Endothelial cell of umbilical vein (primary cell): ENCODE measurements at regions of chr20 and their contacts with region 1.

Region 1: DNA sequence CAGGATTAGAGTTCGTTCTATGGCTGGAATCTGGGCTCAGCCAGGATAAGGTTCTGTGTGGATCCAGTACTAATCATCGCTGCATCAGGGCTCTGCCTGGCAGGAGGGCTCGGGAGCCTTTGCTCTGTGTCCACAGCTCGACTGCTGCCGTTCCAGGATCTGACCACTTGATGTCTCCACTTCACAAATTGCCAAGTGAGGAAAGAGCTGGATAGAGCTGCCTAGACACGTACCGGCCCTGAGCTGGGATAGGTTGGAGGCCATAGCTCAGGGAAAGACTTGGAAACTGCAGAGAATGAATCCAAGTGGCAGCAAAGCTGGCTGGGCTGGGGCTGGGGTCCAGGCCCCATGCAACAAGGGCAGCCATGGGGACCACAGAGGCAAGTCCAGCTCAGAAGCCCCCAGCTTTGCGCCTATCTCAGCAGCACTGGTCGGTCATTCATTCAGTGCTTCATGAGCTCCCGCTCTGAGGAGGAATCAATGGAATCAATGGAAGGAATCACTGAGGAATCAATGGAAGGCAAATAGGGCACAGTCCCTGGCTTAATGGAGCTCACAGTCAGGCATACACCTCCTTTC is 38.0 kb upstream of the TOP1 start:
- DNase-seq: peak; percentile 89
- H3K4me3 ChIP-seq: no peak overlapping the region
- H3K27ac ChIP-seq: no peak overlapping the region
- H3K4me1 ChIP-seq: peaks cover 16% of the 10 kb centered on the region
- H3K27me3 ChIP-seq: no peaks in the 10 kb centered on the region
- CTCF ChIP-seq: peak; percentile 88 to 89
- POLR2A ChIP-seq: no peak

Region 2: GRCh38 chr20:40744072-40744817 is 246.4 kb before region 1 on chr20:
- CTCF ChIA-PET with region 1: no interaction called
- POLR2A ChIA-PET with region 1: no interaction called
- dilution Hi-C with region 1: no loop called
- intact Hi-C with region 1: no loop called
- DNase-seq: no peak
- H3K4me3 ChIP-seq: no peak overlapping the region
- H3K27ac ChIP-seq: no peak overlapping the region
- H3K4me1 ChIP-seq: no peaks in the 10 kb centered on the region
- H3K27me3 ChIP-seq: peaks cover 11 to 14% of the 10 kb centered on the region in 2 experiments
- CTCF ChIP-seq: no peak
- POLR2A ChIP-seq: no peak

Region 3: GRCh38 chr20:40913224-40914185 is 77.1 kb before region 1 on chr20:
- CTCF ChIA-PET with region 1: no interaction called
- POLR2A ChIA-PET with region 1: no interaction called
- dilution Hi-C with region 1: no loop called
- intact Hi-C with region 1: no loop called
- DNase-seq: no peak
- H3K4me3 ChIP-seq: no peak overlapping the region
- H3K27ac ChIP-seq: no peak overlapping the region
- H3K4me1 ChIP-seq: no peaks in the 10 kb centered on the region
- H3K27me3 ChIP-seq: no peaks in the 10 kb centered on the region
- CTCF ChIP-seq: no peak
- POLR2A ChIP-seq: no peak

Region 4: GRCh38 chr20:40931410-40932044 is 59.1 kb before region 1 on chr20:
- CTCF ChIA-PET with region 1: no interaction called
- POLR2A ChIA-PET with region 1: no interaction called
- dilution Hi-C with region 1: no loop called
- intact Hi-C with region 1: no loop called
- DNase-seq: no peak
- H3K4me3 ChIP-seq: no peak overlapping the region
- H3K27ac ChIP-seq: no peak overlapping the region
- H3K4me1 ChIP-seq: no peaks in the 10 kb centered on the region
- H3K27me3 ChIP-seq: no peaks in the 10 kb centered on the region
- CTCF ChIP-seq: no peak
- POLR2A ChIP-seq: no peak

Region 5: GRCh38 chr20:40962730-40963504 is 27.7 kb before region 1 on chr20:
- CTCF ChIA-PET with region 1: interaction called, 33 read pairs
- POLR2A ChIA-PET with region 1: no interaction called
- dilution Hi-C with region 1: no loop called
- intact Hi-C with region 1: loop called (anchors 1 kb)
- DNase-seq: peak; percentile 62
- H3K4me3 ChIP-seq: no peak overlapping the region
- H3K27ac ChIP-seq: no peak overlapping the region
- H3K4me1 ChIP-seq: no peaks in the 10 kb centered on the region
- H3K27me3 ChIP-seq: no peaks in the 10 kb centered on the region
- CTCF ChIP-seq: peak; percentile 78 to 82
- POLR2A ChIP-seq: no peak

Region 6: GRCh38 chr20:41011551-41012067 is 21.0 kb after region 1 on chr20:
- CTCF ChIA-PET with region 1: interaction called, 35 read pairs
- POLR2A ChIA-PET with region 1: interaction called, 3 read pairs
- dilution Hi-C with region 1: no loop called
- intact Hi-C with region 1: no loop called
- DNase-seq: no peak
- H3K4me3 ChIP-seq: no peak overlapping the region
- H3K27ac ChIP-seq: no peak overlapping the region
- H3K4me1 ChIP-seq: peaks cover 41% of the 10 kb centered on the region
- H3K27me3 ChIP-seq: no peaks in the 10 kb centered on the region
- CTCF ChIP-seq: no peak
- POLR2A ChIP-seq: no peak

Region 7: GRCh38 chr20:41047975-41048305 is 57.3 kb after region 1 on chr20:
- CTCF ChIA-PET with region 1: interaction called, 84 read pairs
- POLR2A ChIA-PET with region 1: interaction called, 3 read pairs
- dilution Hi-C with region 1: no loop called
- intact Hi-C with region 1: no loop called
- DNase-seq: no peak
- H3K4me3 ChIP-seq: no peak overlapping the region
- H3K27ac ChIP-seq: no peak overlapping the region
- H3K4me1 ChIP-seq: peaks cover 31% of the 10 kb centered on the region
- H3K27me3 ChIP-seq: no peaks in the 10 kb centered on the region
- CTCF ChIP-seq: no peak
- POLR2A ChIP-seq: no peak

Region 8: GRCh38 chr20:41072190-41072863 is 81.7 kb after region 1 on chr20:
- CTCF ChIA-PET with region 1: interaction called, 228 read pairs
- POLR2A ChIA-PET with region 1: no interaction called
- dilution Hi-C with region 1: no loop called
- intact Hi-C with region 1: no loop called
- DNase-seq: peak; percentile 93
- H3K4me3 ChIP-seq: peak overlapping the region in 1 of 3 experiments; percentile 30
- H3K27ac ChIP-seq: peak overlapping the region; percentile 83
- H3K4me1 ChIP-seq: peaks cover 68% of the 10 kb centered on the region
- H3K27me3 ChIP-seq: no peaks in the 10 kb centered on the region
- CTCF ChIP-seq: no peak
- POLR2A ChIP-seq: no peak

Region 9: DNA sequence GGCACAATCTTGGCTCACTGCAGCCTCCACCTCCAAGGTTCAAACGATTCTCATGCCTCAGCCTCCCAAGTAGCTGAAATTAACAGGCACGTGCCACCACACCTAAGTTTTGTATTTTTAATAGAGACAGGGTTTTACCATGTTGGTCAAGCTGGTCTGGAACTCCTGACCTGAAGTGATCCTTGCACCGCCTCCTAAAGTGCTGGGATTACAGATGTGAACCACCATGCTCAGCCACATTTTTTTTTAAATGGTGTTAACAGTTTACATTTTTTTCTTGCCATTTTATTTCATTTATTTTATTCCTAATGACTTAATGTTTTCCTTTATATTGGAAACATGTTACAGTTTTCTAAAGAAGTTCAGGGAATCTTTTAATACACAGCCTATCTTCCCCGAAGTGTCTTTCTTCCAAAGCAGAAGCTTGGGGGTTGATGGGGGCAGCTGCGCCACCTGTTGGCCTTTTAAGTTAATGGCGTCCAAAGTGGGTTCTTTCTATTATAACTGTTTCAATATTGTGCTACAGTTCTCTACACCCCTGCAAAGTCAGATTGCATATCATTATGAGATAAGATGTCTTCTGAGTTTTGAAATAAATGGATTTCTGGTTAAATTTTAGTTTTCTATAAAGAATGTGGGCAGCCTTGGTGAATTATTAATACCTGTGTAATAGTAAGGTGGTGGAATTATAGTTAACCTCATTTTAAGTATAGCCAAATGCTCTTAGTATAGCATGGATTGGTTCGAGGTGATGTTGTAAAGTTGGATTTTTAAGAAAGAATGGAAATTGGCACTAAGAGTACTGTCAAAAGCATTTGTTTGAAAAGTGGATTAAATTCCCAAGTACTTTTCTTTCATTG is 104.7 kb after region 1 on chr20:
- CTCF ChIA-PET with region 1: interaction called, 282 read pairs
- POLR2A ChIA-PET with region 1: interaction called, 3 read pairs
- dilution Hi-C with region 1: no loop called
- intact Hi-C with region 1: loop called (anchors 1 kb)
- DNase-seq: peak; percentile 71
- H3K4me3 ChIP-seq: no peak overlapping the region
- H3K27ac ChIP-seq: no peak overlapping the region
- H3K4me1 ChIP-seq: peaks cover 14% of the 10 kb centered on the region
- H3K27me3 ChIP-seq: no peaks in the 10 kb centered on the region
- CTCF ChIP-seq: peak; percentile 67 to 75
- POLR2A ChIP-seq: no peak